ENCODE measurements at regions of chrX and their contacts with region 1.

Region 1: GRCh38 chrX:118603981-118604380 is 108.4 kb downstream of the DOCK11 start:
- DNase-seq: peak; percentile 21 to 53 (median 43)
- H3K4me3 ChIP-seq: no peak overlapping the region
- H3K4me3 Mint-ChIP-seq: no peak overlapping the region
- H3K27ac ChIP-seq: no peak overlapping the region
- H3K27ac Mint-ChIP-seq: peak overlapping the region in 1 of 7 donors; percentile 48
- H3K4me1 ChIP-seq: no peaks in the 10 kb centered on the region
- H3K4me1 Mint-ChIP-seq: peaks cover 6% of the 10 kb centered on the region
- H3K27me3 ChIP-seq: no peaks in the 10 kb centered on the region
- H3K27me3 Mint-ChIP-seq: no peaks in the 10 kb centered on the region
- CTCF ChIP-seq: peak; percentile 72

Region 2: DNA sequence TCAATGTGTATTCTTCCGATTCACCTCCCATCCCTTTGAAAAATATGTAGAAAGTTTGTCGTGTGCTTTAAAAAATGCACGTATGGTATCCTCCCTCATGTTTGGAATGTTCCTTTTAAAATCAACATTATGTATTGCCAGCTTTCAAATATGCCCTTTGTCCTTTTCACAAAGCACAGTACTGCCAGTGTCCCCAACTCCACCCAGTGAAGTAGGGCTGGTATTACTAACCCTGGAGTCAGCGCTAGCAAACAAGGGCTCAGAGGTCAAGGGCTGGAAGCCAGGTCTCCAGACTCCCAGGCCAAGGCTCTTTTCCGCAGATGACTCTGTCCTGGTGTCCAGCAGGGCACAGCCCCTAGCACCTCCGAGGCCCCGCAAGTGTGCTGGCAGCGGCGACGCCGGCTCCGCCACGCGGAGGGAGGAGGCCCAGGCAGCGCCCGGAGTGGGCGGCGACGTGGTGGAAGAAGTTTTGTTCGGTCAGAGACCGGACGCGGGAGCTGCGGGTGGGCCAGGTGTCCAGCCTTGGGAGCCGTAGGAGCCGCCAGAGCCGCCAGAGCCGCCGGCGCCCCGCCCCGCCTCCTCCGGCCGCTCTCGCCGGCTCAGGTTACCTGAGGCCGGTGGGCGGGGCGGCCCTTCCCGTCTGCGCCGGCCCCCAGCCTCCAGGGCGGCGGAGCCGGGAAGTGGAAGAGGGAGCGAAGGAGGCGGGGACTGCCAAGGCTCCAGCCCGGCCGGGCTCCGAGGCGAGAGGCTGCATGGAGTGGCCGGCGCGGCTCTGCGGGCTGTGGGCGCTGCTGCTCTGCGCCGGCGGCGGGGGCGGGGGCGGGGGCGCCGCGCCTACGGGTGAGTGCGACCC is 123.1 kb after region 1 on chrX and contains the start of gene IL13RA1:
- intact Hi-C with region 1: no loop called
- DNase-seq: peak; percentile 30 to 63 (median 36)
- H3K4me3 ChIP-seq: peak within 1 kb of the TSS; percentile 60 to 75 (median 73)
- H3K4me3 Mint-ChIP-seq: peak within 1 kb of the TSS; percentile 84 to 92
- H3K27ac ChIP-seq: peak within 1 kb of the TSS; percentile 77 to 78
- H3K27ac Mint-ChIP-seq: peak within 1 kb of the TSS; percentile 89 to 94 (median 91)
- H3K4me1 ChIP-seq: peaks cover 76 to 77% of the 10 kb centered on the region in 2 donors
- H3K4me1 Mint-ChIP-seq: peaks cover 73% of the 10 kb centered on the region
- H3K27me3 ChIP-seq: no peaks in the 10 kb centered on the region
- H3K27me3 Mint-ChIP-seq: peaks cover 0 to 11% (median 0%) of the 10 kb centered on the region in 3 donors
- CTCF ChIP-seq: no peak
- polyA plus RNA-seq, gene IL13RA1: 48.8 to 74.6 (median 72.6) TPM

Region 3: DNA sequence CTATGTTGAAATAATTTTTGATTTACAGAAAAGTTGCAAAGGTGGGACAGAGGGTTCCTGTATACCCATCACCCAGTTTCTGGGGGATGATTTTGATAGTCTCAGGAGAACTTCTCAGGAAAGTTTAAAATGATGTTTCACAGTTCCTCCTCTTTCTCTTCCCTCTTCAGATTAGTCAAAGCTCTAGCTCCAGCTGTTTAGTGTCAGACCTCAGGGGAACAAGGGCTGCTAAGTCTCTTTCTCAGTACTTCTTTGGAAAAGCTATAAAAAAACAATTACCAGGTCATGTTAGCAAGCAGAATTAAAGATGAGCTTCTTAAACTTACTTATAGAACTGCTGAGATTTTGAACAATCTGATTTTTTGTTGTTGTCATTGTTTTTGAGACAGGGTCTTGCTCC is 135.6 kb after region 1 on chrX:
- intact Hi-C with region 1: no loop called
- DNase-seq: no peak
- H3K4me3 ChIP-seq: no peak overlapping the region
- H3K4me3 Mint-ChIP-seq: no peak overlapping the region
- H3K27ac ChIP-seq: no peak overlapping the region
- H3K27ac Mint-ChIP-seq: peak overlapping the region in 4 of 7 donors; percentile 37 to 64 (median 44)
- H3K4me1 ChIP-seq: no peaks in the 10 kb centered on the region
- H3K4me1 Mint-ChIP-seq: peaks cover 28% of the 10 kb centered on the region
- H3K27me3 ChIP-seq: no peaks in the 10 kb centered on the region
- H3K27me3 Mint-ChIP-seq: peaks cover 0 to 8% (median 0%) of the 10 kb centered on the region in 3 donors
- CTCF ChIP-seq: no peak

Region 4: GRCh38 chrX:118807151-118808017 is 203.4 kb after region 1 on chrX:
- intact Hi-C with region 1: loop called in 1 of 2 experiments (anchors 5 kb)
- DNase-seq: peak; percentile 30 to 53 (median 38)
- H3K4me3 ChIP-seq: no peak overlapping the region
- H3K4me3 Mint-ChIP-seq: no peak overlapping the region
- H3K27ac ChIP-seq: no peak overlapping the region
- H3K27ac Mint-ChIP-seq: peak overlapping the region in 1 of 7 donors; percentile 33
- H3K4me1 ChIP-seq: peaks cover 8 to 14% of the 10 kb centered on the region in 2 donors
- H3K4me1 Mint-ChIP-seq: peaks cover 20% of the 10 kb centered on the region
- H3K27me3 ChIP-seq: no peaks in the 10 kb centered on the region
- H3K27me3 Mint-ChIP-seq: peaks cover 0 to 10% (median 2%) of the 10 kb centered on the region in 3 donors
- CTCF ChIP-seq: peak; percentile 67

Measured in CD14-positive monocyte (primary cell).